HEK293T (cell line): ENCODE measurements at regions of chr2 and their contacts with region 1.

Region 1: GRCh38 chr2:61774351-61774750 is 79.5 kb downstream of the FAM161A start:
- DNase-seq: no peak

Region 2: DNA sequence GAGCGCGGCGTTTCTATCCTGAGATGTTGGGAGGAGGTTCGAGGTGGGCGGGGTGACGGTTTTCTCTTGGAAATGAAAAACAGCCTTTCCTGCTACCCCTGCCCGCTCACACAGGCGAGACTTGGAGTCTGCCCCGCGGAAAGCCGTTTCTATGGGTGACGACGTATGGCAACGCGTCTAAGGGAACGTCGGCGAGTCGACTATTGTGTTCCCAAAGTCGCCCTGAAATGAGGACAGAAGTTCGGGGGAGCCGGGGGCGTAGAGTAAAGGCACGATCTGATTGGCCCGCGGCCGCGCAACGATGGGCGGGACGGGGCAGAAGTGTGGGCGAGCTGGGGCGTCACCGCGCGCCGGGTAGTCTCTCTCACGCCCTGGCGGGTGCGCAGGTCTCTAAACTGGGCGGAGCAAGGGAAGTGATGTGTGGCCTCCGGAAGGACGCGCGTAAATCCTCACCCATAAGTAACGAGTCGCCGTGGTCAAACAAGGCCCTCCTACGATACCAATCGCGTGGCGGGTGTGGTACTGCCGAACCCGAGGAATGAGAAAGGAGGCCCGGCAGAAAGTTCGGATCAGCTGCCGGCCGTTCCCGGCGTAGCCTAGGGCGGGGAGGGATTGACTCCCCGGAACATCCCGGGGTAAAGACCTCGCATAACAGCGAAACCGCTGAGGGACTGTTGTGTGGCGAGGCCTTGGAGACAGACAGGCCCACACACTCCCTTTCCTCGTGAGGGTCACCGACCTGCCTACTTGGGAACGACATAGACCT is 10.1 kb before region 1 on chr2:
- CTCF ChIA-PET with region 1: no interaction called
- POLR2A ChIA-PET with region 1: interaction called, 13 read pairs
- DNase-seq: peak; percentile 90

Region 3: GRCh38 chr2:61799054-61799453 is 24.7 kb after region 1 on chr2:
- CTCF ChIA-PET with region 1: no interaction called
- POLR2A ChIA-PET with region 1: no interaction called
- DNase-seq: no peak

Region 4: DNA sequence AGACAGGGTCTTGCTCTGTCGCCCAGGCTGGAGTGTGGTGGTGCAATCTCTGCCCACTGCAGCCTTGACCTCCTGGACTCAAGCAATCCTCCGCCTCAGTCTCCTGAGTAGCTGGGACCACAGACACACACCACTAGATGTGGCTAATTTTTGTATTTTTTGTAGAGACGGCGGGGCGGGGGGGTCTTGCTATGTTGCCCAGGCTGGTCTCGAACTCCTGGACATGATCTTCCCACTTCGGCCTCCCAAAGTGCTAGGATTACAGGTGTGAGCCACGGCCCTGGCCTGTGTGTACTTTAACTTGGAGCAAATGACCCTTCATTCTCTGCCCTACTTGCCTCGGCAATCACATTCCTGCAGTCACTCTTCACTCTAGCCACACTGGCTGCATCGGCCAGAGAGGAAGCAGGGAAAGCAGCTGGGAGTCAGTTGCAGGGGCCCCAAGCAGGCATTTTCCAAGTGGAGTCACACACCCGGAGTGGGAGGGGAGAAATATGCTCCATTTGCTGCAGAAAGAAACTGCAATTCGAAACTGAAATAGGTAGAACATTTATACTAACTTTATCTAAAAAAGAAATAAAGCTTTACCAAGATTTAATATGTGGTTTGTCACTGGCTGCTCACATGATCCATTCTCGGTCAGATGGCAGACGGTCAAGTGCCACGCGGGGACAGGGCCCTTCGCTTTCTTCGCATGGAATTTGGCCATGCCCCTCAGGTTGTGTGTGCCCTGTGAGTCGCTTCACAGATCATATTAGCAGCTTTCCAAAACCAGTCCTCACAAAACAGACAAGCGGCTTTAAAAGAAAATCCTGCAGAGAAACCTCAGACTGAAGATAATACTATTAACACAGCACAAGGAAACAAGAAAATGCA is 42.4 kb after region 1 on chr2:
- CTCF ChIA-PET with region 1: no interaction called
- POLR2A ChIA-PET with region 1: no interaction called
- DNase-seq: no peak